HepG2 (cell line): ENCODE measurements at regions of chr1 and their contacts with region 1.

Region 1: DNA sequence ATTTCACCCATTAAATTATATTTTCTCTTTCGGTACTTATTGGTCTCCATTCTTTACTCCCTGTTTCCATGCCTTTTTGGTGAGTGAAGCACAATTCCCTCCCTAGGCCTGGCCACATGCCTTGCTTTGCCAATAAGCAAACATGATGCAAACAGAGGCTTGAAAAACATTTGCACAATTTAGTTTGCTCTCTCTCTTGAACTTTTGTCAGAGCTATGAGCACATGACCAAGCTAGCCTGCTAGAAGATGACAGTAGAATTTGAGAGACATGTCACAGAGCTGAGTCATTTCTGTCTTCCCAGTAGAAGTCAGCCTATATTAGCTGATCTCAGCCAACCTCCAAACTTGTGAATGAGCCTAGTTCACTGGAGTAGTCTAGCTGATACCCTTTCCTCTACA is 24.6 kb downstream of the ANGPTL3 start:
- DNase-seq: peak; percentile 98
- ATAC-seq: peak; percentile 99
- H3K4me3 ChIP-seq: no peak overlapping the region; a peak in 1 of 6 replicates
- H3K27ac ChIP-seq: peak overlapping the region; percentile 85
- H3K4me1 ChIP-seq: peaks cover 39% of the 10 kb centered on the region
- H3K27me3 ChIP-seq: no peaks in the 10 kb centered on the region
- CTCF ChIP-seq: 0 out of 2 replicates have a peak, but pooled peaks have one; percentile 13
- EP300 ChIP-seq: peak; percentile 68 to 93; a peak in 3 of 4 replicates
- POLR2A ChIP-seq: no peak
- RAD21 ChIP-seq: no peak

Region 2: GRCh38 chr1:62530516-62531154 is 91.3 kb before region 1 on chr1:
- CTCF ChIA-PET with region 1: no interaction called
- POLR2A ChIA-PET with region 1: no interaction called
- in situ Hi-C with region 1: no loop called
- intact Hi-C with region 1: loop called (anchors 10 kb)
- DNase-seq: peak; percentile 45
- ATAC-seq: peak; percentile 98
- H3K4me3 ChIP-seq: no peak overlapping the region
- H3K27ac ChIP-seq: no peak overlapping the region
- H3K4me1 ChIP-seq: peaks cover 26% of the 10 kb centered on the region
- H3K27me3 ChIP-seq: no peaks in the 10 kb centered on the region
- CTCF ChIP-seq: peak; percentile 77
- EP300 ChIP-seq: no peak
- POLR2A ChIP-seq: no peak
- RAD21 ChIP-seq: peak; percentile 71

Region 3: DNA sequence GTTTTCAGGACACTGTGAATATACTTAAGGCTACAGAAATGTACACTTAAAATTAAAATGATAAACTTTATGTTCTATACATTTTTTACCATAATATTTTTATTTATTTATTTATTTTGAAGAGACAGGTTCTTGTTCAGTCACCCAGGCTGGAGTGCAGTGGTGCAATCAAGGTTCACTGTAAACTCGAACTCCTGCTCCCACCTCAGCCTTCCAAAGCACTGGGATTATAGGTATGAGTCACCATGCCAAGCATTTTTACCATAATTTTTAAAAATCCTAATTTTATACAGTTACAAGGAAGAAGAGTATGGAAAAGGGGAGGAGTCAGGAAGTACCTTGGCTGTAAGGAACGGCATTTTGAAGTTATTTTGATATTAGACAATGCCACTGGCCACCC is 48.2 kb before region 1 on chr1:
- CTCF ChIA-PET with region 1: no interaction called
- POLR2A ChIA-PET with region 1: no interaction called
- in situ Hi-C with region 1: no loop called
- intact Hi-C with region 1: no loop called
- DNase-seq: peak; percentile 6
- ATAC-seq: no peak
- H3K4me3 ChIP-seq: no peak overlapping the region
- H3K27ac ChIP-seq: no peak overlapping the region
- H3K4me1 ChIP-seq: 0 out of 2 replicates have a peak, but pooled peaks cover 6% of the 10 kb centered on the region
- H3K27me3 ChIP-seq: no peaks in the 10 kb centered on the region
- CTCF ChIP-seq: no peak
- EP300 ChIP-seq: no peak
- POLR2A ChIP-seq: no peak
- RAD21 ChIP-seq: no peak

Region 4: GRCh38 chr1:62687903-62688686 is 66.2 kb after region 1 on chr1 and contains the start of gene DOCK7:
- CTCF ChIA-PET with region 1: no interaction called
- POLR2A ChIA-PET with region 1: interaction called, 14 read pairs
- in situ Hi-C with region 1: no loop called
- intact Hi-C with region 1: loop called (anchors 5 kb)
- DNase-seq: peak; percentile 48
- ATAC-seq: peak; percentile 61
- H3K4me3 ChIP-seq: peak within 1 kb of the TSS; percentile 75 to 100 (median 96)
- H3K27ac ChIP-seq: peak within 1 kb of the TSS; percentile 96
- H3K4me1 ChIP-seq: peaks cover 71% of the 10 kb centered on the region
- H3K27me3 ChIP-seq: peaks cover 0 to 5% of the 10 kb centered on the region in 2 experiments; a peak in 2 of 5 replicates
- CTCF ChIP-seq: no peak
- EP300 ChIP-seq: peak in 1 of 2 experiments; percentile 37; a peak in 1 of 4 replicates
- POLR2A ChIP-seq: no peak; a peak in 2 of 4 replicates
- RAD21 ChIP-seq: no peak; the same call in 1 of the 2 replicates
- total RNA-seq, gene DOCK7: 45.7 and 86.5 TPM in 2 replicates

Region 5: DNA sequence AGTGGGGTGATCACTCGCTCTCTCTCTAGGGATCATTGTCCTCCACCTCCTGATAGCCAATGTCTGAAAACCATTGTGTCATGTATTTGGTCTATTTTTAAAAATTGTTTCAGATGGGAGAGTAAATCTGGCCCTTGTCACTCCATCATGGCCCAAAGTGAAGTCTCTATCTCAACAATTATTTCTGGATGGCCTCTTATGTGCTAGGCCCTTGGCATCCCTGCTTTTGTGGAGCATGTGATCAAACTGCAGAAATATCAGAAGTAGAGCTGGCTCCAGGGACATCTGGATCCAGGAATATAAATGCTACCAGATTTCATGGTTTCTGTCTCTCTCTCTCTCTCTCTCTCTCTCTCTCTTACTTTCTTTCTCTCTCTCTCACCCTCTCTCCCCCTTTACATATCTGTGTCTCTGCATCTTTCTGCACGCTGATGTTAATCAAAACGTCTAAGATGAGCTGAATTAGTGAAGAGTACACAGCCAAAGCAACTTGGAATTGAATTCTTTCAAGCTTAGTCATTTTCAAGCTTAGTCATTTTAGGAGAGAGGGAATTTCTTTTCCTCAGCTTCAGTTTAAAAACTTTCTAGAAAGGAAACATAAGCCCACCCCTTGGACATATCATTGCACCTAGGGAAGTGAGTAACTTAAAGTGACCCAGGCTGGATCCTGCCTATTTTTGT is 113.7 kb after region 1 on chr1:
- CTCF ChIA-PET with region 1: no interaction called
- POLR2A ChIA-PET with region 1: no interaction called
- in situ Hi-C with region 1: no loop called
- intact Hi-C with region 1: loop called (anchors 10 kb)
- DNase-seq: no peak
- ATAC-seq: no peak
- H3K4me3 ChIP-seq: no peak overlapping the region
- H3K27ac ChIP-seq: peak overlapping the region; percentile 77
- H3K4me1 ChIP-seq: peaks cover 57% of the 10 kb centered on the region
- H3K27me3 ChIP-seq: no peaks in the 10 kb centered on the region
- CTCF ChIP-seq: no peak
- EP300 ChIP-seq: no peak
- POLR2A ChIP-seq: no peak
- RAD21 ChIP-seq: no peak